Activated naive CD4-positive, alpha-beta T cell treated with anti-CD3 and anti-CD28 coated beads, Interleukin-2, amount 10 ng/mL, durations not matched to agents 7 days and 5 days (primary cell): ENCODE measurements at regions of chr7 and their contacts with region 1.

Region 1: DNA sequence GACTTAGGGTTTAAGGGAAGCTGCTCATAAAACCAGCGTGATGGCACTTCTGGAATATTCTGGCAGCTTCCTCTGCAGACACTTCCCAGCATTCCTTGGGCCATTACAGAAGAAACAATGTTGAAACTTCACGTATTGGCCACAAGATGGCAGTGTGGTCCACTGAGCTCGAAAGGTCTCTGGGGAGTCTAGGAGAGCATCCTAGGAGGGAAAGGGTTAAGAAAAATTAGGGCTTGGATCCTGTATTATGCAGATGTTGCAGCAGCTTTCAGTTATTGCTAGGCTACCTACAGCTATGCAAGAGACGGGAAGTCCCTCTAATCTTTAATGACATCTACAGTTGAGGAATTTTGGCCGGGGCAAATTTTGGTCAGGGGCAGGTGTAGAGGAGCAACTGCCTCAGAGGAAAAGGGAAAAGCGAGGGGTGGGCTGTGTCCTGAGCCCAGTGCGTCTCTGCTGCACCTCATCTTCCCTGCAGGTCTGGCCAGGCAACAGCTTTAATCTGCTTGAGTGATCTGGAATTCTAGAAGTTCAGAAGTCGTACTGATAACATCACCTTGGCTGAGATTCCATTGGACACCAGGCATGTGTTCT is 220.7 kb upstream of the PRSS58 start:
- DNase-seq: peak; percentile 44
- H3K4me3 Mint-ChIP-seq: peak overlapping the region; percentile 28
- H3K27ac Mint-ChIP-seq: peak overlapping the region; percentile 17
- H3K4me1 Mint-ChIP-seq: peaks cover 75% of the 10 kb centered on the region
- H3K27me3 Mint-ChIP-seq: peaks cover 6% of the 10 kb centered on the region

Region 2: DNA sequence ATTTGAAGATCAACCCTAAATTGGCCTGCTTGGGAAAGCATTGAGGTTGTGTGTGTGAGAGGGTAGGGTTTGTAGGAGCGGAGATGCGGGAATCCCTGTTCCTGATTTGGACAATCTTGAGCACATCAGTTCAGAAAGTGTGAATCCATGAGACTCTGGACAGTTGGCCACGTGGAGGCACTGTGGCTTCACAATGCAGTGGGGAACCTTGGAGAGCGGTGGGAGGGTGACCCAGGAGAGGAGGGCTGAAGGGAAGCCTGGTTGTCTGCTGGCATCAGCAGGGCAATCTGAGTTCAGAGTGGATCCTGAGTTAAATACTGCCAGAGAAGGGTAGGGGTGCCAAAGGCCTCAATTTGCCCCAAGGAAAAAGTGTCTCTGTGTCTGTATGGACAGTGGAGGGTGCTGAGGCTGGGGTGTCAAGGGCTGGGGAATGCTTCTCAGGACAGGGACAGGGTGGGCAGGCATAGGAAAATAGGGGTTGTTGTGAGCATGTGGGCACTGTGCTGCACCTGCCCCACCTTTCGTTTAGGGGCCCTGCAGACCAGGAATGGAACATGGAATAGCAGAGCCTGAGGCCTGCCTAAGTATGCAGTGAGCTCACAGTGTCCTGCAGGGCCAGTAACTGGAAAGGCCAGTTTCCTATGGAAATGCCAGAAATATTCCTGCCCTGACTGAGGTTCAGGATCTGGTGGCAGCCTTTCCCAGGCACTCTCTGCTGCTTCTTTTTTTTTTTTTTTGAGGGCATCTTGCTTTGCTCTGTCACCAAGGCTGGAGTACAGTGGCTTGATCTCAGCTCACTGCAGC is 57.8 kb before region 1 on chr7:
- CTCF ChIA-PET with region 1: no interaction called
- DNase-seq: no peak
- H3K4me3 Mint-ChIP-seq: no peak overlapping the region
- H3K27ac Mint-ChIP-seq: no peak overlapping the region
- H3K4me1 Mint-ChIP-seq: peaks cover 10% of the 10 kb centered on the region
- H3K27me3 Mint-ChIP-seq: peaks cover 22% of the 10 kb centered on the region

Region 3: DNA sequence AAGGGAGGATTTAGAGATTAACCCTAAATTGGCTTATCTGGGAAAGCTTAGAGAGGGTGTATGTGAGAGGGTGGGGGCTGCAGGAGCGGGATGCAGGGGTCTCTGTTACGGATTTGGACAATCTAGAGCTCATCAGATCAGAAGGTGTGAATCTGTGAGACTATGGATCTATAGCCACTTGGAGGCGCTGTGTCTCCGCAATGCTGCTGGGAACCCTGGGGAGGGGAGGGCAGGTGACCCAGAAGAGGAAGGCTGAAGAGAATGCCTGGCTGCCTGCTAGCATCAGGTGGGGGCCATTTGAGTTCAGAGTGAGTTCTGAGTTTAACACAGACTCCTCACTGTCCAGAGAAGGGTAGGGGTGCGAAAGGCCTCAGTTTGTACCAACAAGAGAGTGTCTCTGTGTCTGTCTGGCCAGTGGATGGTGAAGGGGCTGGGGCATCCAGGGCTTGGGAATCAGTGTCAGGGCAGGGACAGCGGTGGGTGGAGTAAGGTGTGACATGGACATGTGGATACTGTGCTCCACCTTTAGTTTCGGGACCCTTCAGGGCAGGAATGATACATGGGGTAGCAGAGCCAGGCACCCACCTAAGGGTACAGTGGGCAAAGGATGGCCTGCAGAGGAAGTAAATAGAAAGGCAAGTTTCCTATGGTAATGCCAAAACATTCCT is 33.4 kb before region 1 on chr7:
- CTCF ChIA-PET with region 1: interaction called, 18 read pairs
- DNase-seq: peak; percentile 63
- H3K4me3 Mint-ChIP-seq: no peak overlapping the region
- H3K27ac Mint-ChIP-seq: peak overlapping the region; percentile 62
- H3K4me1 Mint-ChIP-seq: peaks cover 34% of the 10 kb centered on the region
- H3K27me3 Mint-ChIP-seq: peaks cover 5% of the 10 kb centered on the region

Region 4: GRCh38 chr7:142612237-142612881 is 133.8 kb after region 1 on chr7:
- CTCF ChIA-PET with region 1: no interaction called
- DNase-seq: no peak
- H3K4me3 Mint-ChIP-seq: no peak overlapping the region
- H3K27ac Mint-ChIP-seq: peak overlapping the region; percentile 42
- H3K4me1 Mint-ChIP-seq: peaks cover 37% of the 10 kb centered on the region
- H3K27me3 Mint-ChIP-seq: peaks cover 17% of the 10 kb centered on the region